ENCODE measurements at regions of chr4 and their contacts with region 1.

Region 1: DNA sequence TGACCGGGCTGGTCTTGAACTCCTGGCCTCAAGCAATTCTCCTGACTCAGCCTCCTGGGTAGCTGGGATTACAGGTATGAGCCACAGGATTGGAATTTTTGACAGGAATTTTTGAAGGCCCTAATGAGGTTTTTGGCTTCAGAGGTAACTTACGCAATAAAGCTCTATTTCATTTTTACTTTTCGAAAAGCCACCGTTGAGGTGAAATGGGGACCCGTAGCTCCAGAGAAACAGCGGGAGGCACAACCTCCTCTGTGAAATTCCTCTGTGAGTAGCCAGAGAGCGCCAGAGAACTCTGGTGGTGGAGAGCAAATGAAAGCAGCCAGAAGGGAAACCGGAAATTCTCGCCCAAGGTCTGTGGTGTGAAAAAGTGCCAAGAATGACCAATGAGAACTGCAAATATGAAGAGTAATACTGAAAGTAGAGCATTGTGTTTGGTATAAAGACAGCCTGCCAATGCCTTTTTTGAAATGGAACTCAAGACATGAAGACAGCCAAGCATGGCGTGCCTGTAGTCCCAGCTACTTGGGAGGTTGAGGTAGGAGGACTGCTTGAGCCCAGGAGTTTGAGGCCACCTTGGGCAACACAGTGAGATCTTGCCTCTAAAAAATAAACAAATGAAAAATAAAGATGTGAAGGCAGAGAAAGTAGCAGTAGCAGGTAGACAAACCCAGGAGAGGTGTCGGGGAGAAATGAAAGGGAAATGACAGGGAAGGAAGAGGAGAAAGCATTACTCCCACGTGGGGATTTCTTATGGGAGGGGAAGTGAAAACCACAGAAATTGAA is 33.0 kb upstream of the TMEM131L start:
- DNase-seq: peak; percentile 29 to 88 (median 61)
- ATAC-seq: peak; percentile 78
- H3K4me3 ChIP-seq: peak overlapping the region; percentile 0 to 46
- H3K4me3 Mint-ChIP-seq: peak overlapping the region; percentile 77
- H3K27ac ChIP-seq: peak overlapping the region; percentile 6 to 63
- H3K27ac Mint-ChIP-seq: peak overlapping the region; percentile 73
- H3K4me1 ChIP-seq: peaks cover 52% of the 10 kb centered on the region
- H3K4me1 Mint-ChIP-seq: peaks cover 72% of the 10 kb centered on the region
- H3K27me3 ChIP-seq: no peaks in the 10 kb centered on the region
- H3K27me3 Mint-ChIP-seq: no peaks in the 10 kb centered on the region
- CTCF ChIP-seq: peak; percentile 59

Region 2: DNA sequence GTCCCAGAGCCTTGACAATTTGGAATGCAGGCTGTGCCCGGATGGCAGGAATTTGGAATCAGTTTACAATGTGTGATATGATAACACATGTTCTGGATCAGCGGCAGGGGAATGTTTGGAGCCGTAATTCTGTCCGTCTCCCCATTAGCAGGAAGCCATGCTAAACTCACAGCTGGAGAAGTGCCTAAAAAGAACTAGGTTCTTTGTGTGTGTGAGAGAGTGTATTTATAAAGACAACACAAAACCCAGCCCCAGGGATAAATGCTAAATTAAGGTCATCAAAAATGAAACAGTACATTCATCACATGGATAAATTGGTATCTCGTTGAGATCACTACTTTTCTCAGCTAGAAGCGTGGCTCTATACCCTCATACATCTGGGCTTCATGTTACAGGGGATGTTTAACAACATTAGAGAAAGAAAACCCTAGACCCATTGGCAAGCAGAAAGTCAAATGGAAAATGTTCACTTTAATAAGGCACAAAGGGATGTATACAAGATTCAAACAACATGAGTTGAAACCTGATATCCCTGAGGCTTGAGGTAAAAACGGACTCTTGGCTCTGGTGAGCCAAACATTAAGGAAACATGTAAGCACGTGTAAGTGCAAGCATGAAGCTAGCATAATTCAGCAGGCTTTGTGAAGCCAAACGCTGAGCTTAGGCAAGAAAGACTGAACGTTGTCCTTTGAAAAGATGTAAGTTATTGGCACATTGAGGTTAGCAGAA is 15.0 kb after region 1 on chr4:
- CTCF ChIA-PET with region 1: interaction called, 13 read pairs
- POLR2A ChIA-PET with region 1: interaction called, 5 read pairs
- intact Hi-C with region 1: loop called in 1 of 2 experiments (anchors 2 kb)
- DNase-seq: no peak
- ATAC-seq: no peak
- H3K4me3 ChIP-seq: no peak overlapping the region
- H3K4me3 Mint-ChIP-seq: no peak overlapping the region
- H3K27ac ChIP-seq: no peak overlapping the region
- H3K27ac Mint-ChIP-seq: no peak overlapping the region
- H3K4me1 ChIP-seq: peaks cover 14% of the 10 kb centered on the region
- H3K4me1 Mint-ChIP-seq: peaks cover 21% of the 10 kb centered on the region
- H3K27me3 ChIP-seq: no peaks in the 10 kb centered on the region
- H3K27me3 Mint-ChIP-seq: no peaks in the 10 kb centered on the region
- CTCF ChIP-seq: no peak

Region 3: GRCh38 chr4:153521999-153522801 is 89.0 kb after region 1 on chr4:
- CTCF ChIA-PET with region 1: interaction called, 6 read pairs
- POLR2A ChIA-PET with region 1: interaction called, 3 read pairs
- intact Hi-C with region 1: loop called in 1 of 2 experiments (anchors 2 kb)
- DNase-seq: peak in 8 of 9 experiments; percentile 37 to 90 (median 66)
- ATAC-seq: peak; percentile 54
- H3K4me3 ChIP-seq: peak overlapping the region; percentile 21 to 28
- H3K4me3 Mint-ChIP-seq: peak overlapping the region; percentile 77
- H3K27ac ChIP-seq: peak overlapping the region; percentile 22 to 75
- H3K27ac Mint-ChIP-seq: peak overlapping the region; percentile 94
- H3K4me1 ChIP-seq: peaks cover 87% of the 10 kb centered on the region
- H3K4me1 Mint-ChIP-seq: peaks cover 91% of the 10 kb centered on the region
- H3K27me3 ChIP-seq: no peaks in the 10 kb centered on the region
- H3K27me3 Mint-ChIP-seq: no peaks in the 10 kb centered on the region
- CTCF ChIP-seq: no peak

Region 4: DNA sequence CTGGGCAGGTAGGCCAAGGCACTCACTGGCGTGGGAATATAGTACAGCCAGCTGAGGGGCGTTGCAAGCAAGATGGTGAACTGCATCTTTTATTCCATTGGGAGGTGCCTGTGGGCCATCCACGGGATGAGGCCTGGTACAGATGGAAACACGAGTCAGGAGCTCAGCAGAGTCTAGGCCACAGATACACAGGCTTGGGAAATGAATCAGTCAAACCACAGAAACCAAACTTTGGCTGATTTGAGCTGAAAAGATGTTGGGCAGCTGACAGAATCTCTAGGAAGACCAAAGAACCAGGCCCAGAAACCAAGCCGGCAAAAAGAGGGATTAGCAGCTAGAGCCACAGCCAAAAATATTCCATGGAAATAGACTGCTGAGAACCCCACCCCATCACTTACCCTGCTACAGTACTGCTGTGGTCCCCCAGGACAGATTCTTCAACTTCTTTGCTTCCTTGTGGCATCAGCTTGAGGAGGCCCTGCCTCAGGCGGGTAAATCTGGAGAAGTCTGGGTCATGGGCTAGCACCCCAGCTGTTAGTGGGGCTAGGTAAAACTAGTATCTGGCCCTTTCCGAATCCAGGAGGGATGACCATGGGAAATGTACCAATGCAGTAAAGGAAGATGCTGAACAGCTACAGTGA is 108.4 kb after region 1 on chr4:
- CTCF ChIA-PET with region 1: interaction called, 11 read pairs
- POLR2A ChIA-PET with region 1: no interaction called
- intact Hi-C with region 1: loop called in 1 of 2 experiments (anchors 2 kb)
- DNase-seq: no peak
- ATAC-seq: no peak
- H3K4me3 ChIP-seq: no peak overlapping the region
- H3K4me3 Mint-ChIP-seq: no peak overlapping the region
- H3K27ac ChIP-seq: peak overlapping the region in 1 of 2 experiments; percentile 23
- H3K27ac Mint-ChIP-seq: peak overlapping the region; percentile 38
- H3K4me1 ChIP-seq: peaks cover 77% of the 10 kb centered on the region
- H3K4me1 Mint-ChIP-seq: peaks cover 92% of the 10 kb centered on the region
- H3K27me3 ChIP-seq: no peaks in the 10 kb centered on the region
- H3K27me3 Mint-ChIP-seq: no peaks in the 10 kb centered on the region
- CTCF ChIP-seq: no peak

Region 5: GRCh38 chr4:153585026-153585425 is 151.9 kb after region 1 on chr4:
- CTCF ChIA-PET with region 1: interaction called, 11 read pairs
- POLR2A ChIA-PET with region 1: no interaction called
- intact Hi-C with region 1: no loop called
- DNase-seq: no peak
- ATAC-seq: no peak
- H3K4me3 ChIP-seq: no peak overlapping the region
- H3K4me3 Mint-ChIP-seq: no peak overlapping the region
- H3K27ac ChIP-seq: no peak overlapping the region
- H3K27ac Mint-ChIP-seq: peak overlapping the region; percentile 67
- H3K4me1 ChIP-seq: no peaks in the 10 kb centered on the region
- H3K4me1 Mint-ChIP-seq: peaks cover 19% of the 10 kb centered on the region
- H3K27me3 ChIP-seq: no peaks in the 10 kb centered on the region
- H3K27me3 Mint-ChIP-seq: no peaks in the 10 kb centered on the region
- CTCF ChIP-seq: no peak